Head of caudate nucleus (tissue), 42 donors: ENCODE measurements at regions of chr3 and their contacts with region 1.

Region 1: DNA sequence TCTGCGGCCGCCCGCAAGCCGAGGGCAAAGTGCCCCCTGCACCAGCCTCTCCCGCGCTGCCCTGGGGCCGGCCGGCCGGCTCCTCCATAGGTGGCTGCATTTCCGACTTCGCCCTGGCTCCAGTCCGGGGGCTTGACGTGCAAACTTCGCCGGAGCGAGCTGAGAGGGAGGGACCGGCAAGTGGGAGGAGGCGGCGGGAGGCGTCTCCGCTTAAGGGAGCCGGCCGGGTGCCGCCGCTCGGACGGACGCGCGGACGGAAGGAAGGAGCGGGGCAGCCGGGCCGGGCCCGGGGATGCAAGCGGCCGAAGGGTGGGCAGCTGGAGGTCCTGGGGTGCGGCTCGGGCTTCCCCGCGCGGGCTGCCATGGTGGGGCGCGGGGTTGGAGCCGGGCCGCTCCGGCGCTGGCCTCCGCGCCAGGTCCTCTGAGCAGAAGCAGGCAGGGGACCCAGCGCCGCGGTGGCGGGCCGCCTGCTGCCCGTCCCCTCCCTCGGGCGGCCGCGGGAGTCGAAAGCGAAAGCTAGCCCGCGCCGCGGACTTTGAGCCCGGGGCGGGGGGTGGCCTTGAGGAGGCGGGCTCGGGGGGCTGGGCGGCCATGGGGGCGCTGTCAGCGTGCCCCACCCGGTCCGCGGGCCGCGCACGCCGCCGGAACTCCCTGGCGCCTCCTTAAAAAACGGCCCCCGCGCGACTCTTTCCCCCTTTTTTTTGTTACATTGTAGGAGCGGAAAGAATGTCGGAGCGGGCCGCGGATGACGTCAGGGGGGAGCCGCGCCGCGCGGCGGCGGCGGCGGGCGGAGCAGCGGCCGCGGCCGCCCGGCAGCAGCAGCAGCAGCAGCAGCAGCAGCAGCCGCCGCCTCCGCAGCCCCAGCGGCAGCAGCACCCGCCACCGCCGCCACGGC is at the start of gene SCAANT1:
- DNase-seq: peak; percentile 64 to 95 (median 87)

Region 2: GRCh38 chr3:63863148-63864007 is 48.7 kb before region 1 on chr3 and contains the starts of genes ATXN7 and THOC7:
- intact Hi-C with region 1: loop called (anchors 2 kb)
- DNase-seq: peak; percentile 11 to 85 (median 68)

Region 3: GRCh38 chr3:63993653-63994079 is 81.5 kb after region 1 on chr3:
- intact Hi-C with region 1: loop called (anchors 10 kb)
- DNase-seq: peak; percentile 47 to 89 (median 74)

Region 4: DNA sequence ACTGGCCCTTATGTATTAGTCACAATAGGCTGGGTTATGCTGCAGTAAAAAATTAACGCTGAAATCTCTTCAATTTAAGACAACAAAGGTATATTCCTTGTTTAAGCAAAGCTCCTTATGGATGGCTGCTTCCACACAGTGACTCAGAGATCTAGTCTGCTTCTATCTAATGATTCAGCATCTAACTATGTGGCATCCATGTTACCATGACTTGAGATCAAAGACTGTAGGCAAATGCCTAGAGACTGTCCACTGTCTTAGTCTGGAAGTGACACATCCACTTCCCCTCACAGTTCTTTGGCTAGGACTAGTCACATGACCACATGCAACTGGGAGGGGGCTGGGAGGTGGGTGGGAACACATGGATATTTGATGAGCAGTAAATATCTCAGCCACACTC is 172.5 kb after region 1 on chr3:
- intact Hi-C with region 1: no loop called
- DNase-seq: no peak